CD14-positive monocyte (primary cell): ENCODE measurements at regions of chr13 and their contacts with region 1.

Region 1: GRCh38 chr13:30465585-30466357 is at the start of gene HMGB1:
- DNase-seq: peak; percentile 96 to 98 (median 96)
- H3K4me3 ChIP-seq: peak within 1 kb of the TSS; percentile 59 to 88 (median 64)
- H3K4me3 Mint-ChIP-seq: peak within 1 kb of the TSS; percentile 89 to 93
- H3K27ac ChIP-seq: peak within 1 kb of the TSS; percentile 73 to 92
- H3K27ac Mint-ChIP-seq: peak within 1 kb of the TSS; percentile 94 to 98 (median 97)
- H3K4me1 ChIP-seq: peaks cover 26 to 36% of the 10 kb centered on the region in 2 donors
- H3K4me1 Mint-ChIP-seq: peaks cover 33% of the 10 kb centered on the region
- H3K27me3 ChIP-seq: no peaks in the 10 kb centered on the region
- H3K27me3 Mint-ChIP-seq: peaks cover 0 to 2% (median 2%) of the 10 kb centered on the region in 3 donors
- CTCF ChIP-seq: no peak
- polyA plus RNA-seq, gene HMGB1: 132 to 489 (median 430) TPM

Region 2: DNA sequence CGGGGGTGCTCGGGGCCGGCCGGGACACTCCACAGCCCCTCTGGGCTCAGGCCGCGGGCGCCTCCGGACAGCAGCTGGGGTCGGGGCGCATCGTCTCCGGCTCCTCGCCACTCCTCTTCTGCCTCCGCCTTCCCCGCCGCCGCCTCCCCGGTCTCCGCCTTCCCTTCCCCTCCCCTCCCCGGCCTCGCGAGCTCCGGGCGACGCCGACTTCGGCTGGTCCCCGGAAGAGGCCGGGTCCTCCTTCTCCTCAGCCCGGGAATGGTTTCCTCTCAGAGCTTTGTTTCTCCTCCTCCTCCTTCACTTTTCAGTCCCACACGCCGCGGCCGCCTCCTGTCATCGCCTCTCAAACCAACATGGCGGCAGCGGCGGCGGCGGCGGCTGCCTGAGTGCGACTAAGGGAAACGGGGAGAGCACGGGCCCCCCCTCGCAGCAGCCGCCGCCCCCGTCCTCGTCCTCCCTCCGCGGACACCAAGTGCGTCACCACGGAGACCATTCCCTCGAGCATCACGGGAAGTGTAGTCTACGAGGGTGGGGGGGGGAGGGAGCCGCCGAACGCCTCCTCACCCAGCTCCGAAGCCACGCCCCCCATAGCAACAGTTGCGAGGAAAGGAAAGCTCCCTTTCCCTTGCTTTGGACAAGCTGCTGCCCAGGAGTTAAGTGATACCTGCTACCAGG is 615.4 kb before region 1 on chr13 and contains the start of gene UBL3:
- intact Hi-C with region 1: loop called in 1 of 2 experiments (anchors 5 kb)
- DNase-seq: peak; percentile 89 to 97 (median 96)
- H3K4me3 ChIP-seq: peak within 1 kb of the TSS; percentile 74 to 91 (median 88)
- H3K4me3 Mint-ChIP-seq: peak within 1 kb of the TSS; percentile 97 to 99
- H3K27ac ChIP-seq: peak within 1 kb of the TSS; percentile 86 to 92
- H3K27ac Mint-ChIP-seq: peak within 1 kb of the TSS; percentile 97 to 100 (median 99)
- H3K4me1 ChIP-seq: peaks cover 19 to 28% of the 10 kb centered on the region in 2 donors
- H3K4me1 Mint-ChIP-seq: peaks cover 33% of the 10 kb centered on the region
- H3K27me3 ChIP-seq: no peaks in the 10 kb centered on the region
- H3K27me3 Mint-ChIP-seq: no peaks in the 10 kb centered on the region
- CTCF ChIP-seq: no peak
- polyA plus RNA-seq, gene UBL3: 13.0 to 32.3 (median 28.2) TPM

Region 3: GRCh38 chr13:30403115-30403855 is 62.5 kb before region 1 on chr13:
- intact Hi-C with region 1: loop called (anchors 5 kb)
- DNase-seq: no peak
- H3K4me3 ChIP-seq: no peak overlapping the region
- H3K4me3 Mint-ChIP-seq: no peak overlapping the region
- H3K27ac ChIP-seq: no peak overlapping the region
- H3K27ac Mint-ChIP-seq: no peak overlapping the region
- H3K4me1 ChIP-seq: peaks cover 4 to 5% of the 10 kb centered on the region in 2 donors
- H3K4me1 Mint-ChIP-seq: peaks cover 7% of the 10 kb centered on the region
- H3K27me3 ChIP-seq: no peaks in the 10 kb centered on the region
- H3K27me3 Mint-ChIP-seq: peaks cover 0 to 1% (median 0%) of the 10 kb centered on the region in 3 donors
- CTCF ChIP-seq: no peak

Region 4: GRCh38 chr13:30422054-30422839 is 43.5 kb before region 1 on chr13 and contains the start of gene UBE2L5:
- intact Hi-C with region 1: loop called in 1 of 2 experiments (anchors 5 kb)
- DNase-seq: peak; percentile 61 to 85 (median 67)
- H3K4me3 ChIP-seq: peak within 1 kb of the TSS; percentile 60 to 90 (median 82)
- H3K4me3 Mint-ChIP-seq: peak within 1 kb of the TSS; percentile 81 to 93
- H3K27ac ChIP-seq: peak within 1 kb of the TSS; percentile 75 to 85
- H3K27ac Mint-ChIP-seq: peak within 1 kb of the TSS; percentile 86 to 99 (median 92)
- H3K4me1 ChIP-seq: peaks cover 18 to 19% of the 10 kb centered on the region in 2 donors
- H3K4me1 Mint-ChIP-seq: peaks cover 14% of the 10 kb centered on the region
- H3K27me3 ChIP-seq: no peaks in the 10 kb centered on the region
- H3K27me3 Mint-ChIP-seq: peaks cover 0 to 9% (median 2%) of the 10 kb centered on the region in 3 donors
- CTCF ChIP-seq: no peak
- polyA plus RNA-seq, gene UBE2L5: not detected

Region 5: DNA sequence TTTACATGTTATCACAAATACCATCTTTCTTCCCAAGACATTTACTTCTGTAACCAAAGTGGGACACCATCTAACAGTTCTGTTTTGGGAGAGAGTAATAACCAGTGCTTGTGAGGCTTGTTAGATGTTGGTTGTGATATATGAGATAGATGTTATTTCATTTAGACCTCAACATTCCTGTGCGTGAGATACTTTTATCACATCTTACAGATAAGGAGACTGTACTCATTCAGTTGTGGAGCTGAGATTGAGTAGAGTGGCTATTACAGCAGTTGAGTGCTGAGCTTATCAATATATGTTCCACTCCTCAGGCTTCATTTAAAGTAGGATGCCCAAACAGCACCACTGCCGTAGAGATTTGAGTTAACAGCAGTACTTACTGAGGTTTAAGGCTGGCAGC is 195.0 kb after region 1 on chr13:
- intact Hi-C with region 1: no loop called
- DNase-seq: no peak
- H3K4me3 ChIP-seq: no peak overlapping the region
- H3K4me3 Mint-ChIP-seq: no peak overlapping the region
- H3K27ac ChIP-seq: no peak overlapping the region
- H3K27ac Mint-ChIP-seq: no peak overlapping the region
- H3K4me1 ChIP-seq: peaks cover 43 to 54% of the 10 kb centered on the region in 2 donors
- H3K4me1 Mint-ChIP-seq: peaks cover 23% of the 10 kb centered on the region
- H3K27me3 ChIP-seq: no peaks in the 10 kb centered on the region
- H3K27me3 Mint-ChIP-seq: no peaks in the 10 kb centered on the region
- CTCF ChIP-seq: no peak

Region 6: GRCh38 chr13:30673669-30674521 is 208.1 kb after region 1 on chr13:
- intact Hi-C with region 1: loop called in 1 of 2 experiments (anchors 5 kb)
- DNase-seq: peak; percentile 96 to 98 (median 97)
- H3K4me3 ChIP-seq: peak overlapping the region; percentile 30 to 71 (median 46)
- H3K4me3 Mint-ChIP-seq: peak overlapping the region; percentile 89 to 95
- H3K27ac ChIP-seq: peak overlapping the region; percentile 14 to 65
- H3K27ac Mint-ChIP-seq: peak overlapping the region; percentile 66 to 91 (median 89)
- H3K4me1 ChIP-seq: peaks cover 18 to 20% of the 10 kb centered on the region in 2 donors
- H3K4me1 Mint-ChIP-seq: peaks cover 25% of the 10 kb centered on the region
- H3K27me3 ChIP-seq: no peaks in the 10 kb centered on the region
- H3K27me3 Mint-ChIP-seq: peaks cover 0 to 5% (median 2%) of the 10 kb centered on the region in 3 donors
- CTCF ChIP-seq: peak; percentile 78